Sigmoid colon (tissue), 7 donors: ENCODE measurements at regions of chr1 and their contacts with region 1.

Region 1: DNA sequence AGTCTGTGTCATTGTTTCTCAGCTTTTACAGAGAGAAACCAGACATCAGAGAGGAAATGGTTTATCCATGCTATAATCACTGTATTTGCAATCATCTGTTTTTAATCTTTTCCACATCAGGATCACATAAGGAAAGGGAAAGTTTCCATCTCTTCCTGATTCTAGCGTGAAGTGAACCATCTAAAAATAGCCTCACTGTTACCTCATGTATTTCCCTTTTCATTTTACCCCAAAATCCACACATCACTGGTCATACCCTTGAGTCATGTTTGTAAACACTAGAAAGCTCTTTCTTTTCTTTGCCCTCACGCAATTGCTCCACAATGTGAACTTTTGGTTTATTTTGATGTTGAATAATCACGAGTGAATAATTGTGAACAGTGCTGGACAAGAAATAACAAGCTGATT is 146.0 kb downstream of the PLA2G4A start:
- DNase-seq: no peak
- H3K4me3 ChIP-seq: no peak overlapping the region
- H3K27ac ChIP-seq: peak overlapping the region; percentile 27 to 84 (median 72)
- H3K4me1 ChIP-seq: peaks cover 0 to 55% (median 47%) of the 10 kb centered on the region in 4 donors
- H3K27me3 ChIP-seq: no peaks in the 10 kb centered on the region
- CTCF ChIP-seq: no peak
- EP300 ChIP-seq: no peak
- POLR2A ChIP-seq: no peak

Region 2: DNA sequence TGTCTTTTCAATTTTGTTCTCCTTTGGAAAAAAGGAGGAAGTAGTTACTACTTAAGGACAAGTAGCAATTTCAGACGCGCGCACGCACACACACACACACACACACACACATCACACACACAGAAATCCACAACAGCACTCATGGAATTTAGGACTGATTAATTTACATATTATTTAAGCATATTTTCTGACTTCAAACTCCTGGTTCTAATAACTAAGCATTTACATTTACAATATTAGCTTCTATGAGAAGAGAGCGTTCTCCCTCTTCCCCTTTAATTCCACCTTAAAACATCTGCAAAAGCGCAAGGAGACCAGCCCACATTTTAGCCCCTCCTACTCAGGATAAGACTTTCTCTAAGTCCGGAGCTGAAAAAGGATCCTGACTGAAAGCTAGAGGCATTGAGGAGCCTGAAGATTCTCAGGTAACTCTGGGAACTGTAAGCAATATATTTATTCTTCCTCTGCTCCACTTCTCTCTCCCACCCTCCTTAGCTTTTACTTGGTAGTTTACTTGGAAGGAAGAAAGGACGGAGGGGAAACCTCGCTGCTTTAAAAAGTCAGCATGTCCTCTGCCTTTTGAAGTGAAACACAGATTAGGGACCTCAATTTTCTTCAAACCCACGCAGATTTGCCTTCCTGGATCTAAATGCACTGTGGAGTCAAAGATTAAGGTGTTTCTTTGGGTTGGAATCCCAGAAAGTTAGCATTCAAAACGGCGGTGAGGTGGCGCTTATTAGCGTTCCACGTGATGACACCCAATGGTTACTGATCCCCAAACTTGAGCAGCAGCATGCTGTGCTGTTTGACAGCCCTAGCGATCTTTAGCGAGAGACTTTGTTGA is 145.9 kb before region 1 on chr1 and contains the start of gene PLA2G4A:
- intact Hi-C with region 1: loop called (anchors 2 kb)
- DNase-seq: peak; percentile 70
- H3K4me3 ChIP-seq: peak within 1 kb of the TSS; percentile 69 to 79 (median 76)
- H3K27ac ChIP-seq: peak within 1 kb of the TSS; percentile 72 to 87 (median 86)
- H3K4me1 ChIP-seq: peaks cover 0 to 28% (median 12%) of the 10 kb centered on the region in 4 donors
- H3K27me3 ChIP-seq: no peaks in the 10 kb centered on the region
- CTCF ChIP-seq: no peak
- EP300 ChIP-seq: no peak
- POLR2A ChIP-seq: no peak
- total RNA-seq, gene PLA2G4A: 17.2 to 51.0 (median 29.0) TPM